ENCODE measurements at regions of chr3 and their contacts with region 1.

Region 1: DNA sequence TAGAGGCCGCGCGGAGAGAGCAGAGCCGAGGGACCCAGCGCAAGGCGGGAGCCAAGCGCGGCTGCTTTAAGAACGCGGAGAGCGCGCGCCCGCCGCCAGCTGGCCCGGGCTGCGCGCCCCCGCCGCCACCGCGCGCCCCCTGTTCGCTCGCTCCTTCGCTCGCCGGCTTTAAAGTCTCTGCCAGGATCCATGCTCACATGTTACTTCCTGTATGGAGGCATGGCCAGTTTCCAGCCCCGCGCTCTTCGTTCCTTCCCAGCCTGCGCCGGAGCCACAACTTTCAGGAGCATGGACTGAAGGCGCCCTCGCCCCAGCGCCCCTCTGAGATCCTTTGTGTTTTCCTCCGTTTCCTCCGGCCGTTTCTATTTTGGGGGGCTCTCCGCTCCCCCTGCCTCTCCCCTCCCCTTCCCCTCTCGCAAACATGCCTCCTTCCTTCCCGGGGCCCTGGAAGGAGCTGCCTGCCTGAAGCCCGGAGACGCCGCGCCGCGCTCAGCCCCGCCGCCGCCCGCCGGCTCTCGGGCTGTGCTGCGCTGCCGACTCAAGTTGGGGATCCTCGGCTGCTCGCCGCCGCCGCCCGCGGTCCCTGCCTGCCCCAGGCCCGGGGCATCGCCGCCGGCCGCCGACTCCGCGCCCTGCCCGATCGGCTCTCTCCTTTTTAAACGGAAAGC is at the start of gene PTPRG:
- DNase-seq: peak; percentile 87 to 92
- ATAC-seq: peak; percentile 76 to 89 (median 80)
- H3K4me3 ChIP-seq: peak within 1 kb of the TSS; percentile 73 to 96 (median 90)
- H3K27ac ChIP-seq: peak within 1 kb of the TSS; percentile 89 to 99 (median 97)
- H3K4me1 ChIP-seq: peaks cover 5 to 40% (median 29%) of the 10 kb centered on the region in 9 donors
- H3K27me3 ChIP-seq: peaks cover 0 to 72% (median 0%) of the 10 kb centered on the region in 7 donors
- CTCF ChIP-seq: no peak
- total RNA-seq, gene PTPRG: 25.8 to 38.3 (median 33.1) TPM

Region 2: DNA sequence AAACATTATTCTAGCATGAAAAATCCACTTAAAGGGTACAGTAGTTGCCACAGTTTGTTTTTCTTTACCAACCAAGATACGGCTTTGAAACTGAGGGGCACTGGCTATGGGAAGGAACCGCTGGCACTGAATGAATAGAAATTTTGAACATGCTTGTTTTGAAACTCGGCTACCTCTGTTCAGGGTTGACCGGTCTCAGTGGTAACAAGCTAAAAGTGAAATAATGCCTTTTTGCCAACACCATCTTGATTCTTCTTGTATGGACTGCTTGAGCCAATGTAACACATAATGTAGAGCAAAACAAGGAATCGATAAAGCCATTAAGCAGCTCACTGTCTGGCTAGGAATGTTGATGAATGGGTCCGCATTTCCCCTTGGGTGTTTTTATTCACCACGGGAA is 36.4 kb after region 1 on chr3:
- intact Hi-C with region 1: loop called in 1 of 10 experiments (anchors 1 kb)
- DNase-seq: no peak
- ATAC-seq: no peak
- H3K4me3 ChIP-seq: no peak overlapping the region
- H3K27ac ChIP-seq: no peak overlapping the region
- H3K4me1 ChIP-seq: peaks cover 10 to 67% (median 46%) of the 10 kb centered on the region in 9 donors
- H3K27me3 ChIP-seq: no peaks in the 10 kb centered on the region
- CTCF ChIP-seq: no peak

Region 3: GRCh38 chr3:61725851-61726333 is 164.4 kb after region 1 on chr3:
- intact Hi-C with region 1: loop called in 1 of 10 experiments (anchors 5 kb)
- DNase-seq: peak in 1 of 2 donors; percentile 56
- ATAC-seq: peak; percentile 48 to 91 (median 86)
- H3K4me3 ChIP-seq: no peak overlapping the region
- H3K27ac ChIP-seq: peak overlapping the region in 8 of 10 donors; percentile 10 to 68 (median 52)
- H3K4me1 ChIP-seq: peaks cover 0 to 68% (median 32%) of the 10 kb centered on the region in 9 donors
- H3K27me3 ChIP-seq: no peaks in the 10 kb centered on the region
- CTCF ChIP-seq: no peak

Region 4: GRCh38 chr3:61858056-61858455 is 296.5 kb after region 1 on chr3:
- intact Hi-C with region 1: loop called in 4 of 10 experiments (anchors 5 to 10 kb)
- DNase-seq: no peak
- ATAC-seq: peak in 6 of 8 donors; percentile 44 to 63 (median 59)
- H3K4me3 ChIP-seq: no peak overlapping the region
- H3K27ac ChIP-seq: peak overlapping the region in 1 of 10 donors; percentile 10
- H3K4me1 ChIP-seq: peaks cover 5 to 87% (median 46%) of the 10 kb centered on the region in 9 donors
- H3K27me3 ChIP-seq: no peaks in the 10 kb centered on the region
- CTCF ChIP-seq: peak; percentile 27 to 79 (median 58)

Region 5: GRCh38 chr3:61936344-61936937 is 374.9 kb after region 1 on chr3:
- intact Hi-C with region 1: loop called in 2 of 10 experiments (anchors 5 to 10 kb)
- DNase-seq: no peak
- ATAC-seq: peak in 2 of 8 donors; percentile 24 to 38
- H3K4me3 ChIP-seq: no peak overlapping the region
- H3K27ac ChIP-seq: no peak overlapping the region
- H3K4me1 ChIP-seq: peaks cover 0 to 31% (median 4%) of the 10 kb centered on the region in 9 donors
- H3K27me3 ChIP-seq: no peaks in the 10 kb centered on the region
- CTCF ChIP-seq: peak; percentile 5 to 54 (median 42)

Measured in heart right ventricle (tissue), 16 donors.